Esophagus muscularis mucosa (tissue), 4 donors: ENCODE measurements at regions of chr17 and their contacts with region 1.

Region 1: DNA sequence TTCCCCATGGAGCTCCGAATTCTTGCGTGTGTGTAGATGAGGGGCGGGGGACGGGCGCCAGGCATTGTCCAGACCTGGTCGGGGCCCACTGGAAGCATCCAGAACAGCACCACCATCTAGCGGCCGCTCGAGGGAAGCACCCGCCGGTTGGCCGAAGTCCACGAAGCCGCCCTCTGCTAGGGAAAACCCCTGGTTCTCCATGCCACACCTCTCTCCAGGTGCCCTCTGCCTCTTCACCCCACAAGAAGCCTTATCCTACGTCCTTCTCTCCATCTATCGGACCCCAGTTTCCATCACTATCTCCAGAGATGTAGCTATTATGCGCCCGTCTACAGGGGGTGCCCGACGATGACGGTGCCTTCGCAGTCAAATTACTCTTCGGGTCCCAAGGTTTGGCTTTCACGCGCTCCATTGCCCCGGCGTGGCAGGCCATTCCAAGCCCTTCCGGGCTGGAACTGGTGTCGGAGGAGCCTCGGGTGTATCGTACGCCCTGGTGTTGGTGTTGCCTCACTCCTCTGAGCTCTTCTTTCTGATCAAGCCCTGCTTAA is 617 bp upstream of the SENP3 start:
- DNase-seq: peak; percentile 98
- H3K4me3 ChIP-seq: peak overlapping the region; percentile 74 to 96 (median 88)
- H3K27ac ChIP-seq: peak overlapping the region; percentile 89 to 99 (median 93)
- H3K4me1 ChIP-seq: peaks cover 61 to 80% (median 70%) of the 10 kb centered on the region in 4 donors
- H3K27me3 ChIP-seq: no peaks in the 10 kb centered on the region
- CTCF ChIP-seq: peak; percentile 76 to 96 (median 87)
- EP300 ChIP-seq: no peak
- POLR2A ChIP-seq: no peak

Region 2: GRCh38 chr17:7252176-7253043 is 308.7 kb before region 1 on chr17 and contains the start of gene ELP5:
- intact Hi-C with region 1: loop called (anchors 10 kb)
- DNase-seq: peak; percentile 98
- H3K4me3 ChIP-seq: peak within 1 kb of the TSS; percentile 78 to 98 (median 96)
- H3K27ac ChIP-seq: peak within 1 kb of the TSS; percentile 98 to 100 (median 99)
- H3K4me1 ChIP-seq: peaks cover 36 to 52% (median 44%) of the 10 kb centered on the region in 4 donors
- H3K27me3 ChIP-seq: no peaks in the 10 kb centered on the region
- CTCF ChIP-seq: peak in 2 of 3 experiments; percentile 24 to 36
- EP300 ChIP-seq: no peak
- POLR2A ChIP-seq: no peak
- total RNA-seq, gene ELP5: 24.9 to 33.3 (median 27.8) TPM

Region 3: DNA sequence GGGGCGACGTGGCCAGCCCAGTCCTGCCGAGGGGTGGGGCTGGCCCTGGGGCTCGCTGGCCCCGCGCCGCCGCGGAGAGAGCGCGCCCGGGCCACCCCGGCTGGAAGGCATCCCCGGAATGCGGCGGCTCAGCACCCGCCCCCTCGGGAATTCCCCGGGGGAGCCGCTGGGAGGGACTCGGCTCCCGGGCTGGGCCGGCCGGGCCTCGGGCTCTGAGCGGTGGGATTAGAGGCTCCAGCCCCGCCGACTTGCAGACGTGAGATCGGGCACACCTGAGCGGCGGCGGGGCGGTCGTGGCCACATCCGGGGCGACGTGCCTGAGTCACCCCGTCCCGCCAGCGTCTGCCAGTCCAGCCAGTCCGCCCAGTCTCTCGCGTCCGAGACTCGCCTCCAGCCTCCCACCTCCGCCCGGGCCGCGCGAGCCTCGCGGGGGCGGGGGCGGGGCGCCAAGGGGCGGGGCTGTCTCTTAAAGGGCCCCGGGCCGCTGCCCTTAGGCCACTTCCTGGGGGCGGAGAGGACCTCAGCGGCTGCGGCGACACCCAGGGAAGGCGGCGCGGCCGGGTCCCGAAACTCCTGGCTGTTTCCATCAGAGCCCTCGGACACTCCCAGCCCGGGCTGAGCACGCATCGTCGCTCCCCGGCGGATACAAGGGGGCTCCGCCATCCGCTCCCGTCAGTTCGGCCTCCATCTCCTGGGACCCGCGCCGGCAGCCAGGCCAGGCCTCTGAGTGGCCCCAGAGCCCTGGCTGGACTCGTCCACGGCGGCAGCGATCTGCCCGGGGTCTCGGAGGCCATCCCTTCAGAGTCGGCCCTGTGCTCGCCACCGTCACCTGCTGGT is 209.2 kb before region 1 on chr17 and contains the start of gene KCTD11:
- intact Hi-C with region 1: loop called (anchors 2 kb)
- DNase-seq: peak; percentile 96
- H3K4me3 ChIP-seq: peak within 1 kb of the TSS; percentile 86 to 98 (median 90)
- H3K27ac ChIP-seq: peak within 1 kb of the TSS; percentile 98 to 100 (median 99)
- H3K4me1 ChIP-seq: peaks cover 24 to 77% (median 71%) of the 10 kb centered on the region in 4 donors
- H3K27me3 ChIP-seq: no peaks in the 10 kb centered on the region
- CTCF ChIP-seq: peak; percentile 47 to 74 (median 61)
- EP300 ChIP-seq: no peak
- POLR2A ChIP-seq: peak; percentile 22
- total RNA-seq, gene KCTD11: 9.1 to 18.2 (median 13.3) TPM

Region 4: GRCh38 chr17:7435221-7435675 is 125.9 kb before region 1 on chr17 and contains the start of gene TMEM102:
- intact Hi-C with region 1: loop called (anchors 5 kb)
- DNase-seq: peak; percentile 98
- H3K4me3 ChIP-seq: peak within 1 kb of the TSS; percentile 41 to 62 (median 46)
- H3K27ac ChIP-seq: peak within 1 kb of the TSS; percentile 27 to 56 (median 40)
- H3K4me1 ChIP-seq: peaks cover 50 to 57% (median 55%) of the 10 kb centered on the region in 4 donors
- H3K27me3 ChIP-seq: peaks cover 0 to 76% (median 25%) of the 10 kb centered on the region in 4 donors
- CTCF ChIP-seq: no peak
- EP300 ChIP-seq: no peak
- POLR2A ChIP-seq: no peak
- total RNA-seq, gene TMEM102: 1.2 to 6.1 (median 3.5) TPM

Region 5: DNA sequence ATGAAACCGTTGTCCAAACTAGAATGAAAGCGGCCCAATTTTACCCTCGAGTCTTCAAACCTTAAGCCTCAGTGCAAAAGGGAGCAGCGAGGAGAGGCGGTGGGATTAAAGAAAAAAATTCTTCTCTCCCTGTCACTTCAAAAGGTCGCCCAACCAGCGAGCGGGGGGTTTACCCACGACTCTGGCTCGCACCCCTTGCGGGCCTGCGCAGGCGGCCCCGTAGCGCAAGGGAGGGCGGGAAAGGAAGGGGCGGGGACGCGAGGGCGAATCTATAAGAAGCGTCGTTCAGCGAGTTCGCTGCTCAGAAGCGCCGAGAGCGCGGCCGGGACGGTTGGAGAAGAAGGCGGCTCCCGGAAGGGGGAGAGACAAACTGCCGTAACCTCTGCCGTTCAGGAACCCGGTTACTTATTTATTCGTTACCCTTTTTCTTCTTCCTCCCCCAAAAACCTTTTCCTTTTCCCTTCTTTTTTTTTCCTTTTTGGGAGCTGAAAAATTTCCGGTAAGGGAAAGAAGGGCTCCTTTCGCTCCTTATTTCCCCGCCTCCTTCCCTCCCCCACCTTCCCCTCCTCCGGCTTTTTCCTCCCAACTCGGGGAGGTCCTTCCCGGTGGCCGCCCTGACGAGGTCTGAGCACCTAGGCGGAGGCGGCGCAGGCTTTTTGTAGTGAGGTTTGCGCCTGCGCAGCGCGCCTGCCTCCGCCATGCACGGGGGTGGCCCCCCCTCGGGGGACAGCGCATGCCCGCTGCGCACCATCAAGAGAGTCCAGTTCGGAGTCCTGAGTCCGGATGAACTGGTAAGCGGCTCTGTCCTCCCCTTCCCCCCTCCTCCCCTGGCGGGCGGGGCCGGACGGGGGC is 76.8 kb before region 1 on chr17 and contains the start of gene POLR2A:
- intact Hi-C with region 1: loop called (anchors 2 kb)
- DNase-seq: peak; percentile 99
- H3K4me3 ChIP-seq: peak within 1 kb of the TSS; percentile 52 to 92 (median 70)
- H3K27ac ChIP-seq: peak within 1 kb of the TSS; percentile 100
- H3K4me1 ChIP-seq: peaks cover 57 to 81% (median 80%) of the 10 kb centered on the region in 4 donors
- H3K27me3 ChIP-seq: peaks cover 0 to 3% (median 0%) of the 10 kb centered on the region in 4 donors
- CTCF ChIP-seq: peak in 1 of 3 experiments; percentile 12
- EP300 ChIP-seq: no peak
- POLR2A ChIP-seq: peak; percentile 100
- total RNA-seq, gene POLR2A: 29.5 to 66.4 (median 46.9) TPM

Region 6: DNA sequence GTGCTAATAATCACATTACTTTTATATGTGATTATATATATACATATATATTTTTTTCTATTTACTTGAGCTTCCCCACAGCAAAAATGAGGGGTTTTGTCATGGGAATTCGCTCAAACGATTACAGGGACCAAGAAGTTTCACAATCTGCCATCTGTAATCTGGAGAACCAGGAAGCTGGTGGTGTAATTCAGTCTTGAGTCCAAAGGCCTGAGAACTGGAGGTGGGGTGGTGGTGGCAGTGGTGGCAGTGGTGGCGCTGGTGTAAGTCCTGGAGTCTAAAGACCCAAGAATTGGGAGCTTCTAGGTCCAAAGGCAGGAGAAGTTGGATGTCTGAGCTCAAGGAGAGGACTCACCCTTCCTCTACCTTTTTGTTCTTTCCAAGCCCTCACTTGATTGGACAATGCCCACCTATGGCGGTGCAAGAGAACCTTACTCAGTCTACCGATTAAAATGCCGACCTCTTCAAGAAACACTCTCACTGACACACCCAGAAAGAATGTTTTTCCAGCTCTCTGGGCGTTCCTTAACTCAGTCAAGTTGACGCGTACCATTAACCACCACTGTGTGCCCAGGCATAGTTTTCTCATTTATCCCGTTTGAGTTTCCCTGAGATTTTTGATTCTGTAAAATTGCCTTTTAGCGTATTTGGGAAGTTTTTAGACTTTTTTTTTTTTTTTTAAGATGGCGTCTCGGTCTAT is 45.0 kb before region 1 on chr17:
- intact Hi-C with region 1: loop called (anchors 2 kb)
- DNase-seq: no peak
- H3K4me3 ChIP-seq: no peak overlapping the region
- H3K27ac ChIP-seq: no peak overlapping the region
- H3K4me1 ChIP-seq: peaks cover 0 to 6% (median 0%) of the 10 kb centered on the region in 4 donors
- H3K27me3 ChIP-seq: no peaks in the 10 kb centered on the region
- CTCF ChIP-seq: no peak
- EP300 ChIP-seq: no peak
- POLR2A ChIP-seq: no peak

Region 7: GRCh38 chr17:7650509-7651096 is 89.5 kb after region 1 on chr17 and contains the start of gene ATP1B2:
- intact Hi-C with region 1: no loop called
- DNase-seq: no peak
- H3K4me3 ChIP-seq: peak within 1 kb of the TSS; percentile 55 to 63 (median 58)
- H3K27ac ChIP-seq: peak within 1 kb of the TSS; percentile 52 to 72 (median 66)
- H3K4me1 ChIP-seq: peaks cover 19 to 27% (median 25%) of the 10 kb centered on the region in 4 donors
- H3K27me3 ChIP-seq: peaks cover 0 to 39% (median 24%) of the 10 kb centered on the region in 4 donors
- CTCF ChIP-seq: no peak
- EP300 ChIP-seq: no peak
- POLR2A ChIP-seq: no peak
- total RNA-seq, gene ATP1B2: 1.6 to 2.9 (median 2.2) TPM

Region 8: GRCh38 chr17:8435245-8436168 is 874.4 kb after region 1 on chr17 and contains the start of gene NDEL1:
- intact Hi-C with region 1: no loop called
- DNase-seq: peak; percentile 99
- H3K4me3 ChIP-seq: peak within 1 kb of the TSS; percentile 86 to 98 (median 96)
- H3K27ac ChIP-seq: peak within 1 kb of the TSS; percentile 100
- H3K4me1 ChIP-seq: peaks cover 29 to 45% (median 37%) of the 10 kb centered on the region in 4 donors
- H3K27me3 ChIP-seq: no peaks in the 10 kb centered on the region
- CTCF ChIP-seq: no peak
- EP300 ChIP-seq: no peak
- POLR2A ChIP-seq: peak; percentile 98
- total RNA-seq, gene NDEL1: 48.2 to 80.8 (median 55.5) TPM